Activated B cell treated with CpG ODN at 0.5 μM for 24 hours (primary cell): ENCODE measurements at regions of chr6 and their contacts with region 1.

Region 1: DNA sequence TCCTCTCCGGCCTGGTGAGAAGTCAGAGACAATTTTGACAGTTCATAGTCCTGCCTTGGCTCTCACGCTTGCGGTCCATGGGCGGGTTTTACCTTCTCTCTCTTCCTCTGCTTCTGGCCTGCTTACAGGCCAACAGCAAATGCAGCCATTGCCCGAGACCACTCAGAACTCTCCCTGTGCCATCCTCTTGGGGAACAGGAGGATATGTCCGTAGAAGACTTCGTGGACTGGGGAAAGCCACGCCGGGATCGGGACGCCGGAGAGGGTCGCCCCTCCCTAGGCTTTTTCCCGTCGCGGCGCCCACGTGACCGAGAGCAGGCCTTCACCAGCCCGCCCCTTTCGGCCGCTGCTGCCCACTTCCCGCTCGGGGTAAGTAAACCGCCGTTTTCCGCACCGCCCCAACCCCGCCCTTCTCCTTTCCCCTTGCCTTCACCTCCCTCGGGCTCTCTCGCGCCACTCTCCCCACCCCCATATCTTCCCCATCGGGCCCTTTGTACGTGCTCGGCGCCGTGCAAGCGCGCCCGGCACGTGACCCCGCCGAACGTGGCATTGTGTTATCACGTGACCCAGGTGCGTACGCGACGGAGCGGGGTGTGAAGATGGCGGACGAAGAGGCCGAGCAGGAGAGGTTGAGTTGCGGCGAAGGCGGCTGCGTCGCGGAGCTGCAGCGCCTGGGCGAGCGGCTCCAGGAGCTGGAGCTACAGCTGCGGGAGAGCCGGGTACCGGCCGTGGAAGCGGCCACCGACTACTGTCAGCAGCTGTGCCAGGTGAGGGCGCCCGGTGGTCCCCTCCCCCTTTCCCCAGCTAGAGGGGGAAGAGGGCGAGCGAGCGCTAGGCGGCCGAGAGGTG is at the start of gene ZNF292:
- DNase-seq: peak; percentile 94
- ATAC-seq: peak; percentile 85
- H3K4me3 Mint-ChIP-seq: peak within 1 kb of the TSS; percentile 91
- H3K27ac Mint-ChIP-seq: peak within 1 kb of the TSS; percentile 97
- H3K4me1 Mint-ChIP-seq: peaks cover 57% of the 10 kb centered on the region
- H3K27me3 Mint-ChIP-seq: no peaks in the 10 kb centered on the region
- CTCF ChIP-seq: no peak
- total RNA-seq, gene ZNF292: 54.8 and 66.6 TPM in 2 replicates

Region 2: DNA sequence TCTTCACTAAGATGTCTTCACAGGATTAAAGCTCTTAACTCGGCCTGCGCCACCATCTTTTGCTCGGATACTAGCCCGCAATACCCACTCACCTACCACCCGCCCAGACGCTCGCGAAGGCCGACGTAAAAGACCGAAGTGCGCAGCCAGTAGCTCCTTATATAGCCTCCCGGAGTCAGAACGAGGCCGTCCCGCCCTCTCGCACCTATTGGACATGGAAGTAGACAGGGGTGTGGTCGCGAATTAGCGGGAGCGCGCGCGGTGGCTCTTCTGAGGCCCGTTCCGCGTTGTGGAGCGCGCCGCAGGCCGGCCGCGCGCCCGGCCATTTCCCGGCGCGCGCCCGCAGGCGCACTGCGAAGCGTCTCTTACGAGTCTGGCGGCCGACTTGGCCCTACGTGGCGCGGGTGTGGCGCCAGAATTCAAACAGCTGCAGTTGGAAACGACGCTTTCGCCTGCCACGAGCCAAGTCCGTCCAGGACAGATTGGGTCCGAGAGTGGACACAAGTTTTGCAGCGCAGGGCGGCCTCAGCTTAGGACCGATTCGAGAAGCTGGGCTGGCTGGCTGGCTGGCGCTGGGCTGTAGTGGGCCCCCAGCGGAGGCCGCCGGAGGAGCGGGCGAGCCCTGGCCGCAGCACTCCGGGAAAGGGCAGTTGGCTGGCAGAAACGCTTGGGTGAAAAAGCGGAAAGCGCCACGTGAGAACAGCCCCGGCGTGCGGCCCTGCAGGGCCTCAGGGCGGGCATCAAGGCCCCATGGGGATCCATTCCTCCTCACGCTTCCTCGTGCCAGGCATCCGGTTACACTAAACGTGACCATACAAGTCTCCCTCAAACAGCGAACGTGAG is 1476.4 kb before region 1 on chr6:
- CTCF ChIA-PET with region 1: no interaction called
- POLR2A ChIA-PET with region 1: interaction called, 14 read pairs
- intact Hi-C with region 1: loop called (anchors 10 kb)
- DNase-seq: peak; percentile 96
- ATAC-seq: peak; percentile 87
- H3K4me3 Mint-ChIP-seq: peak overlapping the region; percentile 99
- H3K27ac Mint-ChIP-seq: peak overlapping the region; percentile 98
- H3K4me1 Mint-ChIP-seq: peaks cover 48% of the 10 kb centered on the region
- H3K27me3 Mint-ChIP-seq: no peaks in the 10 kb centered on the region
- CTCF ChIP-seq: no peak

Region 3: GRCh38 chr6:86978251-86978650 is 177.0 kb before region 1 on chr6:
- CTCF ChIA-PET with region 1: no interaction called
- POLR2A ChIA-PET with region 1: no interaction called
- intact Hi-C with region 1: no loop called
- DNase-seq: no peak
- ATAC-seq: no peak
- H3K4me3 Mint-ChIP-seq: no peak overlapping the region
- H3K27ac Mint-ChIP-seq: no peak overlapping the region
- H3K4me1 Mint-ChIP-seq: no peaks in the 10 kb centered on the region
- H3K27me3 Mint-ChIP-seq: peaks cover 26% of the 10 kb centered on the region
- CTCF ChIP-seq: no peak

Region 4: GRCh38 chr6:87182321-87182720 is 27.1 kb after region 1 on chr6:
- CTCF ChIA-PET with region 1: no interaction called
- POLR2A ChIA-PET with region 1: interaction called, 13 read pairs
- intact Hi-C with region 1: loop called (anchors 1 kb)
- DNase-seq: no peak
- ATAC-seq: peak; percentile 88
- H3K4me3 Mint-ChIP-seq: peak overlapping the region; percentile 67
- H3K27ac Mint-ChIP-seq: peak overlapping the region; percentile 86
- H3K4me1 Mint-ChIP-seq: peaks cover 67% of the 10 kb centered on the region
- H3K27me3 Mint-ChIP-seq: no peaks in the 10 kb centered on the region
- CTCF ChIP-seq: no peak

Region 5: DNA sequence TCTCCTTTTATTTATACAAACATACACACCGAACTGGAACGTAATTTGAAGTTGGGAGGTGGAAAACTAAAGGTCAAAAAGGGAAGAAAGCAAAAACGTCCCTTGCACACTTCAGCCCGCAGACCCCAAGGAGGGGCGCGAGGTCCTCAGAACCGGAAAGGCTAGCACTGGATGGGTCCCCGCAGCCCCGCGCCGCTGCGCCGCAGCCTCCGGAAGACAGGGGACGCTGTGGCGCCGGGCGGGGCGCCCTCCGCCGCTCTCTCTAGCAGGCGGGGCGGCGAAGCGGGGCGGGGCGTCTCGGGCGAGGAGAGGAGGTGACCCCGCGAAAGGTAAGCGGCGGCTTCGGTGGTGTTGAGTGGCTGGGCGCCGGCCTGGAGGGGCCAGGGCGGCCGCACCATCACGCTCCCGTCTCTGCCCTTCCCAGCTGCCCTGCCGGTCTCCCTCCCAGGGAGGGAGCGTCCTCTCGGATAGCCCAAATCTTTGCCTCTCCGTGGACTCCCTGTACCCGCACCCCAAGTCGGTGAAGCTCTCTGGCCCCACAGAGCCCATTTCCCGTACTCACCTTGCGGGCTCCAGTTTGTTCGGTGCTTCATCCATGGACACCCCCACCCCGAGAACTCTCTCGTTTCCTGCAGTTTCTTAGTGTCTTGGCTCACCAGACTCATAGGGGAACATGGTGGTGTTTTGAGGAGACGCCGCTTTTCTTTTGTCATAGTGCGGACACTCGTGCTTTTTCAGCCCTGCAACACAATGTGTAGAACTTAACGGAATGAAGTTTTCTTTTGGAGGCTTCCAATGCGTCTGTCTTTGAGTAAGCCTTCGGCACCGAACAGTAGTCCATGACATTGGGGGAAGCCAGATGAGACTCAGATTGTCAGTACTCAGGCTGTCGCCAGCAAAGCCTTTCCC is 167.3 kb after region 1 on chr6 and contains the start of gene SMIM8:
- CTCF ChIA-PET with region 1: no interaction called
- POLR2A ChIA-PET with region 1: no interaction called
- intact Hi-C with region 1: loop called (anchors 1 kb)
- DNase-seq: peak; percentile 89
- ATAC-seq: peak; percentile 100
- H3K4me3 Mint-ChIP-seq: peak within 1 kb of the TSS; percentile 98
- H3K27ac Mint-ChIP-seq: peak within 1 kb of the TSS; percentile 90
- H3K4me1 Mint-ChIP-seq: peaks cover 25% of the 10 kb centered on the region
- H3K27me3 Mint-ChIP-seq: no peaks in the 10 kb centered on the region
- CTCF ChIP-seq: peak; percentile 79
- total RNA-seq, gene SMIM8: 11.1 and 14.4 TPM in 2 replicates

Region 6: DNA sequence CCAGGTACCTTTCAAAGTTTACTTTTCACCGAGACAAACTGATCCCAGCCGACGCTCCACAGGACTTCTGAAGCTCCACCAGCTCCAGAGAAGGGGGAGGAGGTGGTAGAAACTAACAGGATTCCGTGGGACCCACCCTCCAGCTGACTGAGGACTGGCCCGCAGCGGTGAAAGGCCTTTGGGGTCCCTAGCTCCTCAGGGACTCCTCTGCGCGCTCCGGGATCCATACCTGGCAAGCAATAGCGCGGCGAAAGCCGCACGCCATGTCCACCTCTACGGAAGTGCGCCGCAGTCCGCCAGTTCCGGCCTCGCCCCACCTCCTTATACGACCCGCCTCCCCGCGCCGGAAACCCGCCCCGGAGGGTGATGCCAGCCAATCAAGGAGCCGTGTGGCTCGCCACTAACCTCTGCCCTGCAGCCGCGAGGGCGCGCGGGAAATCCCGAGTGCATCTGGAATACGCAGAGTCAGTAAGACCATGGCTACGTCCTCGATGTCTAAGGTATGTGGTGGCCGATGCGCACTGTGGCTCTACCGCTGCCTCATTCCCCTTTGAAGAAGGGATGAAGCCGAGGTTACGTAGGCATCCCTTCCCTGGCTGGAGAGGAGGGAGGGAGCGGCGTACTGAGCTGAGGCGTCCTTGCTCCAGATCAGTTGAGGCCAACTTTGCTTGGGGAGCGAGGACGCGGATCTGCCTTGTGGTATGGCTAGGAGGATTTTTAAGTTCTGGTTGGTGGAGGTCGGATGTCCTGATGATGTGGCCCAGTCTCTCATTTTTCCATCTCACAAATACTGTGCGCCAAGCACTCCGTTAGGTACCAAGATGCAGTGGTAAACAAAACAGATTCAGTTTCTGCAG is 434.7 kb after region 1 on chr6 and contains the starts of genes ORC3 and RARS2:
- CTCF ChIA-PET with region 1: no interaction called
- POLR2A ChIA-PET with region 1: no interaction called
- intact Hi-C with region 1: loop called (anchors 1 kb)
- DNase-seq: peak; percentile 90
- ATAC-seq: peak; percentile 99
- H3K4me3 Mint-ChIP-seq: peak within 1 kb of the TSS; percentile 97
- H3K27ac Mint-ChIP-seq: peak within 1 kb of the TSS; percentile 88
- H3K4me1 Mint-ChIP-seq: peaks cover 50% of the 10 kb centered on the region
- H3K27me3 Mint-ChIP-seq: no peaks in the 10 kb centered on the region
- CTCF ChIP-seq: no peak
- total RNA-seq, gene ORC3: 24.6 and 27.7 TPM in 2 replicates
- total RNA-seq, gene RARS2: 24.8 and 27.0 TPM in 2 replicates

Region 7: GRCh38 chr6:88963139-88964090 is 1808.2 kb after region 1 on chr6 and contains the start of gene RNGTT:
- CTCF ChIA-PET with region 1: no interaction called
- POLR2A ChIA-PET with region 1: no interaction called
- intact Hi-C with region 1: loop called (anchors 10 kb)
- DNase-seq: peak; percentile 96
- ATAC-seq: peak; percentile 100
- H3K4me3 Mint-ChIP-seq: peak within 1 kb of the TSS; percentile 99
- H3K27ac Mint-ChIP-seq: peak within 1 kb of the TSS; percentile 95
- H3K4me1 Mint-ChIP-seq: peaks cover 42% of the 10 kb centered on the region
- H3K27me3 Mint-ChIP-seq: no peaks in the 10 kb centered on the region
- CTCF ChIP-seq: no peak
- total RNA-seq, gene RNGTT: 24.8 and 25.9 TPM in 2 replicates